PC-3 (cell line): ENCODE measurements at regions of chr3 and their contacts with region 1.

Region 1: GRCh38 chr3:88385090-88385489 is 235.3 kb downstream of the C3orf38 start:
- DNase-seq: no peak
- ATAC-seq: no peak
- H3K4me3 ChIP-seq: no peak overlapping the region
- H3K27ac ChIP-seq: no peak overlapping the region
- H3K4me1 ChIP-seq: no peaks in the 10 kb centered on the region
- H3K27me3 ChIP-seq: no peaks in the 10 kb centered on the region
- CTCF ChIP-seq: no peak

Region 2: GRCh38 chr3:88151358-88151757 is 233.7 kb before region 1 on chr3:
- CTCF ChIA-PET with region 1: no interaction called
- POLR2A ChIA-PET with region 1: no interaction called
- intact Hi-C with region 1: no loop called
- DNase-seq: peak; percentile 24
- ATAC-seq: no peak
- H3K4me3 ChIP-seq: peak overlapping the region; percentile 90
- H3K27ac ChIP-seq: no peak overlapping the region
- H3K4me1 ChIP-seq: peaks cover 17% of the 10 kb centered on the region; the same call in 1 of the 2 replicates
- H3K27me3 ChIP-seq: no peaks in the 10 kb centered on the region
- CTCF ChIP-seq: no peak

Region 3: DNA sequence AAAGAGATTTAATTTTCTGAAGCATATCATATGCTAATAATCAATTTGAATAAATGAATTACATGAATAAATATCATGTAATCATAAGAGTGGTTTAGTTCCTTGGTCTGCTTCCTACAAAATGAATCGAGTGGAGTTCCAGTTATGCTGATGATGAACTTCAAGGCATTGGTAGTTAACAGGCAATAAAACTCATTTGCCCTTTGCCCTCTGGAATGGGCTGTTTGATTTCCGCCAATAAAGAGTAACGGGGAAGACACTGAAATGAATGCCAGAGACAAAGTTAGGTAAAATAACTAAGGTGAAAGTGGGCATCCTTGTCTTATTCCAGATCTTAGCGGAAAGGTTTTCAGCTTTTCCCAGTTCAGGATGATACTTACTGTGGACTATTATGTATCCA is 145.2 kb before region 1 on chr3:
- CTCF ChIA-PET with region 1: no interaction called
- POLR2A ChIA-PET with region 1: no interaction called
- intact Hi-C with region 1: no loop called
- DNase-seq: no peak
- ATAC-seq: no peak
- H3K4me3 ChIP-seq: no peak overlapping the region
- H3K27ac ChIP-seq: no peak overlapping the region
- H3K4me1 ChIP-seq: no peaks in the 10 kb centered on the region
- H3K27me3 ChIP-seq: peaks cover 20% of the 10 kb centered on the region
- CTCF ChIP-seq: no peak

Region 4: GRCh38 chr3:88433568-88433967 is 48.5 kb after region 1 on chr3:
- CTCF ChIA-PET with region 1: no interaction called
- POLR2A ChIA-PET with region 1: no interaction called
- intact Hi-C with region 1: loop called (anchors 5 kb)
- DNase-seq: no peak
- ATAC-seq: no peak
- H3K4me3 ChIP-seq: no peak overlapping the region
- H3K27ac ChIP-seq: no peak overlapping the region
- H3K4me1 ChIP-seq: no peaks in the 10 kb centered on the region
- H3K27me3 ChIP-seq: 0 out of 2 replicates have a peak, but pooled peaks cover 3% of the 10 kb centered on the region
- CTCF ChIP-seq: no peak